Aorta (tissue), 5 donors: ENCODE measurements at regions of chr9 and their contacts with region 1.

Region 1: GRCh38 chr9:104927912-104928740 is at the start of gene ABCA1:
- DNase-seq: peak; percentile 96 to 97
- ATAC-seq: peak; percentile 94
- H3K4me3 ChIP-seq: peak within 1 kb of the TSS; percentile 85 to 87
- H3K27ac ChIP-seq: peak within 1 kb of the TSS; percentile 45 to 85
- H3K4me1 ChIP-seq: no peaks in the 10 kb centered on the region
- H3K27me3 ChIP-seq: no peaks in the 10 kb centered on the region
- total RNA-seq, gene ABCA1: 26.3 to 44.7 TPM

Region 2: DNA sequence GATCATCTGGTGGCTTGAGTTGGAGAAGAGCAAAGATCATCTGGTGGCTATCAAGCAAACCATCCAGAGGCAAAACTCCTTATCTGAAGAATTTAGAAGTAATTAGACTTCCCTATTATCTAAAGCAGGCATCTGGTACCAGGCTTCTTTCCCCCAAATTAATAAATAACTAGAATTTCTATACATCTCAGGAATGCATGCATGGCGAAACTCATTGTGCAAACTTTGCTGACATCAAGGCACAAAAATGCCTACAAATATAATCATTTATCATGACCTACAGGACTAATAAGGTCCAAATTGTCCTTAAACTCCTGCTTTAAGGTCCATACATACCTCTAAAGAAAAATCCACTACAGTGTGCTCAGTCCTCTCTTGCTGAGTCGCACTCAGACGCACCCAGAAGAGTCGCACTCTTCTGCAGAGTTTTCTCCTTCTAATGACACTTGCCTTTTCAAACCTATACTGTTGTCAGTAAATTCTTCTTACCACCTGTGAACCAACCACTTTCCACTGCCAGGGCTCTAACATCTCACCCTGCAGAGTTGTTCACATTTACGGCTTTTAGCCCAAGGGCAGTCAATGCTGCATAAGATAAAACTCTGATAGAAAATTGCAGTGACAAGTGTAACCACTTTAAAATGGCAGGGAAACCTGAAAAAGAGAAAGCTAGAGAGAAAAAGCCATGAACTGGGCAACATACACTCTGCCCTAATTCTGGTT is 227.7 kb before region 1 on chr9:
- intact Hi-C with region 1: no loop called
- DNase-seq: no peak
- ATAC-seq: no peak
- H3K4me3 ChIP-seq: no peak overlapping the region
- H3K27ac ChIP-seq: no peak overlapping the region
- H3K4me1 ChIP-seq: no peaks in the 10 kb centered on the region
- H3K27me3 ChIP-seq: no peaks in the 10 kb centered on the region

Region 3: DNA sequence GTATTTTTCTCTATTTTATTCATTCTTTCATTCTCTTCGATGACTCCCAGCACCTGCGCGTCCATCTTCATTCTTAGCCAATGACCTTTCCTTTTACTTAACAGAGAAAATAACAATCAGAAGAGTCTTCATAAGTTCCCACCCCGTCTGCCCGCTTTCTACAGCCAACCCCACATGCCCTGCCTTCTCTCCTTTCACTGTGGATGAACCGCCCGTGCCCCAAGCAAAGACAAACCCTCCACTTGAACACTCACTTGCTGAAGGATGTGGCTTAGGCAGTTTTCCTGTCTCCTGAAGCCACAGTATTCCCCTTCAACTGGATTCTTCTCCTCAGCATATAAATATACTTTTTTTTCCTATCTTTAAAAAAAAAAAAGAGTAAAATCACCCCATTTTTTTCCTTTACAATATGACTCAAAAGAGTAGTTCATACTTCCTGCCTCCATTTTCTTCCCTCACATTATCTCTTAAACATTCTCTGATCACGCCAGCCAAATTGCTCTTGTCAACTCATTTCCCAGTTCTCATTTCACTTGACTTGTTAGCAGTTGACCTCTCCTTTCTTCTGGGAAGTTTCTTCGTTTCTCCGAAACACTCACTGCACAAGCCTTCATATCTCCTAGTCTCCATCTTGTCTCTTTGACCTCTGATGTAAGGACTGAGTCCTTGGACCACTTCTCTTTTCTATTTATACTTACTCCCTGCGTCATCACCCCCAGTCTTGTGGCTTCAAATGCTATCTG is 153.1 kb before region 1 on chr9:
- intact Hi-C with region 1: loop called in 1 of 2 experiments (anchors 10 kb)
- DNase-seq: no peak
- ATAC-seq: no peak
- H3K4me3 ChIP-seq: no peak overlapping the region
- H3K27ac ChIP-seq: no peak overlapping the region
- H3K4me1 ChIP-seq: peaks cover 0 to 6% of the 10 kb centered on the region in 2 donors
- H3K27me3 ChIP-seq: no peaks in the 10 kb centered on the region

Region 4: GRCh38 chr9:104856413-104856941 is 71.6 kb before region 1 on chr9:
- intact Hi-C with region 1: loop called in 1 of 2 experiments (anchors 5 kb)
- DNase-seq: no peak
- ATAC-seq: no peak
- H3K4me3 ChIP-seq: no peak overlapping the region
- H3K27ac ChIP-seq: no peak overlapping the region
- H3K4me1 ChIP-seq: peaks cover 0 to 4% of the 10 kb centered on the region in 2 donors
- H3K27me3 ChIP-seq: no peaks in the 10 kb centered on the region

Region 5: GRCh38 chr9:104968025-104968982 is 40.2 kb after region 1 on chr9:
- intact Hi-C with region 1: loop called (anchors 1 to 2 kb)
- DNase-seq: peak; percentile 92 to 96
- ATAC-seq: peak; percentile 97
- H3K4me3 ChIP-seq: peak overlapping the region; percentile 43 to 75
- H3K27ac ChIP-seq: peak overlapping the region in 1 of 2 donors; percentile 60
- H3K4me1 ChIP-seq: no peaks in the 10 kb centered on the region
- H3K27me3 ChIP-seq: no peaks in the 10 kb centered on the region

Region 6: GRCh38 chr9:104991144-104991953 is 63.2 kb after region 1 on chr9:
- intact Hi-C with region 1: loop called in 1 of 2 experiments (anchors 5 kb)
- DNase-seq: peak; percentile 95 to 96
- ATAC-seq: peak; percentile 95
- H3K4me3 ChIP-seq: peak overlapping the region; percentile 44 to 88
- H3K27ac ChIP-seq: peak overlapping the region; percentile 83 to 87
- H3K4me1 ChIP-seq: peaks cover 0 to 10% of the 10 kb centered on the region in 2 donors
- H3K27me3 ChIP-seq: no peaks in the 10 kb centered on the region

Region 7: GRCh38 chr9:105046907-105047741 is 119.0 kb after region 1 on chr9:
- intact Hi-C with region 1: no loop called
- DNase-seq: no peak
- ATAC-seq: no peak
- H3K4me3 ChIP-seq: no peak overlapping the region
- H3K27ac ChIP-seq: no peak overlapping the region
- H3K4me1 ChIP-seq: no peaks in the 10 kb centered on the region
- H3K27me3 ChIP-seq: no peaks in the 10 kb centered on the region

Region 8: DNA sequence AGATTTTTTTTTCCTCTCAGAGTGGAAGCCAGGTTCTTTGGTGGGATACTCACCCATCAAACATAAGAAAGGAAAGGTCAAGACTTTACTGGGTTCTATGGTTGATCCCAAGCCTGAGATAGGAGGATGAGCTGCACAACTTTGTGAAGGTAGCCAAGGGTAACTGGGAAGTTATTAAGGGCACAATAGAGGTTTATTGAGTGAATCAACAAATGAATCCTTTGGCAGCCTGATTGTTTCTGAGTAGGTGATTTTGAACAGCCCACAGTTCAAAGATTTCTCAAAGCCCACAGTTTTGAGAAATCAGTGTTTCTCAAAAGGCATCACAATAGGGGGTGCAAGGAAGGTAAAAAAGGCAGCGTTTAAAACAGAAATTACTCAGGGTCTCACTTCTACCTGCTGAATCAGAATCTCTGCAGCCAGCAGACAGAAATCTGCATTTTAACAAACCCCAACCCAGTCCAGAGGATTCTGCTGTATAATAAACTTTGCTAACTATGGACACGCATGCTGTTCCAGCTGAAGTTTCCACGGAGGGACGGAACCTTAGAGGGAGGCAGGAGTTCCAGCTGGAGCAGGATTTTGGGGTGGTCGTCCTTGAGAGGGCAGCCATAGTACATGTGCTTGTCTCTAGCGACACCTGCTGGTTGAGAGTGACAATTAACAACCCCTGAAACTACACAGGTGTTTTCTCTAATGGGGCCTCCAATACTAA is 487.0 kb after region 1 on chr9:
- intact Hi-C with region 1: loop called (anchors 2 to 10 kb)
- DNase-seq: no peak
- ATAC-seq: peak; percentile 85
- H3K4me3 ChIP-seq: no peak overlapping the region
- H3K27ac ChIP-seq: no peak overlapping the region
- H3K4me1 ChIP-seq: peaks cover 0 to 2% of the 10 kb centered on the region in 2 donors
- H3K27me3 ChIP-seq: no peaks in the 10 kb centered on the region